Transverse colon (tissue), 4 donors: ENCODE measurements at regions of chr17 and their contacts with region 1.

Region 1: GRCh38 chr17:27892866-27893769 is at the start of gene LYRM9:
- DNase-seq: peak; percentile 94
- H3K4me3 ChIP-seq: peak within 1 kb of the TSS; percentile 51 to 73 (median 65)
- H3K27ac ChIP-seq: peak within 1 kb of the TSS; percentile 81 to 88 (median 86)
- H3K4me1 ChIP-seq: peaks cover 3 to 12% (median 8%) of the 10 kb centered on the region in 4 donors
- H3K27me3 ChIP-seq: peaks cover 5% of the 10 kb centered on the region
- CTCF ChIP-seq: peak; percentile 67 to 88 (median 85)
- EP300 ChIP-seq: no peak
- POLR2A ChIP-seq: peak; percentile 42
- total RNA-seq, gene LYRM9: 2.6 to 33.0 (median 12.1) TPM

Region 2: GRCh38 chr17:27824745-27825144 is 68.4 kb before region 1 on chr17:
- in situ Hi-C with region 1: no loop called
- intact Hi-C with region 1: no loop called
- DNase-seq: no peak
- H3K4me3 ChIP-seq: no peak overlapping the region
- H3K27ac ChIP-seq: peak overlapping the region in 2 of 4 donors; percentile 10 to 18
- H3K4me1 ChIP-seq: peaks cover 0 to 12% (median 7%) of the 10 kb centered on the region in 4 donors
- H3K27me3 ChIP-seq: no peaks in the 10 kb centered on the region
- CTCF ChIP-seq: no peak
- EP300 ChIP-seq: no peak
- POLR2A ChIP-seq: no peak

Region 3: DNA sequence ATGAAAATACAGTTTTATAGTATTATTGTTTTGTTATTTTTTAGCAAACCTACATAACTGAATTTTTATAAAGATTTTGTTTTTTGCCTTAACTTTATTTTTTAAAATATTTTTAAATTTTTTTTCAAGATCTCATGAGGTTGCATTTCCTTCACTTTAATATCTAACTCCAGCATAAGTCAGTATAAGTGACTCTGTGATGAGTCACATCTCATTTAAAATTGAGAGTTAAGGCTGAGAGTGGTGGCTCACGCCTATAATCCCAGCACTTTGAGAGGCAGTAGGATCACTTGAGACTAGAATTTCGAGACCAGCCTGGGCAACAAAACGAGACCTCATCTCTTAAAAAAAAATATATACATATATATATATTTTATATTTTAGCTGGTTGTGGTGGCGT is 193.4 kb after region 1 on chr17:
- in situ Hi-C with region 1: loop called in 1 of 4 experiments (anchors 10 kb)
- intact Hi-C with region 1: no loop called
- DNase-seq: no peak
- H3K4me3 ChIP-seq: no peak overlapping the region
- H3K27ac ChIP-seq: no peak overlapping the region
- H3K4me1 ChIP-seq: peaks cover 9 to 23% (median 15%) of the 10 kb centered on the region in 4 donors
- H3K27me3 ChIP-seq: no peaks in the 10 kb centered on the region
- CTCF ChIP-seq: no peak
- EP300 ChIP-seq: no peak
- POLR2A ChIP-seq: no peak